Heart right ventricle (tissue), 16 donors: ENCODE measurements at regions of chr12 and their contacts with region 1.

Region 1: DNA sequence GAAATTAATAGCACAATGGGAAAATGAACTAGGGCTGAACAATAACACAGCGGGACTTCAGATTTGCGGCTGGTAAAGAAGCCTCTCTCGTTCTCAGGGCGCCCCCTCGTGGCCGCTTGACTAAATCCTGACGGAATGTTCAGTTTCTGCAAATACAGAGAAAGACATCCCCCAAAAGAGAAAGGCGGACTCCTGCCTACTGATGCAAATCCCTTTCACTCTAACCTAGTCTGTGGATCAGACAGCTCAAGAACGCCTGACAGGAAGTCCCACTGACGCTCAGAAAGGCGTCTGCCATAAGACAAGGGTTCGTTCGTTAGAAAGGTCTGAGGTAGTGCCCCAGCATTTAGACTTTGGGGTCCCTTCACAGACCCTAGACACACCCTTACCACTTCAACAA is 2.5 kb downstream of the NUAK1 start:
- DNase-seq: peak; percentile 91 to 92
- ATAC-seq: peak in 6 of 8 donors; percentile 0 to 66 (median 46)
- H3K4me3 ChIP-seq: peak overlapping the region; percentile 64 to 97 (median 88)
- H3K27ac ChIP-seq: peak overlapping the region; percentile 93 to 100 (median 98)
- H3K4me1 ChIP-seq: peaks cover 26 to 75% (median 61%) of the 10 kb centered on the region in 9 donors
- H3K27me3 ChIP-seq: peaks cover 0 to 54% (median 0%) of the 10 kb centered on the region in 7 donors
- CTCF ChIP-seq: peak; percentile 79 to 93 (median 87)

Region 2: DNA sequence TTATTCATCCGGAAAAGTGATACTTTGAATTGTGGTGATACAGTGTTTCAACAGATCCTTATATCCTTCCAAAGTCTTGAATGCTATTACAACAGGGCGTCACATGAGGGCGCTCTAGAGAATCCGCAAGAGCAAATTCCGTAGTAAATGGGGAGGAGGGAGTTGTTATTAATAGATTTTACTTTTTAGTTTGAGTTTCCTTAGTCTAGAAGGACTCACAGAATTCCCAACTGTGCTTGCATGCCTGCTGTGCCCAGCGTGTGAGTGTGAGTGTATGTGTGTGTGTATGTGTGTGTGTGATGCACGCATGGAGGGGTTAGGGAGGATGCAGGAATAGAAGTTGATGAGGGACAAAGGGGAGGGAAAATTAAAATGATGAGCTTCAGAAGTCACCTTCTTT is 430.5 kb before region 1 on chr12:
- intact Hi-C with region 1: loop called (anchors 2 to 10 kb)
- DNase-seq: peak in 1 of 2 donors; percentile 74
- ATAC-seq: peak; percentile 34 to 79 (median 62)
- H3K4me3 ChIP-seq: no peak overlapping the region
- H3K27ac ChIP-seq: peak overlapping the region in 8 of 10 donors; percentile 22 to 64 (median 46)
- H3K4me1 ChIP-seq: peaks cover 0 to 21% (median 12%) of the 10 kb centered on the region in 9 donors
- H3K27me3 ChIP-seq: no peaks in the 10 kb centered on the region
- CTCF ChIP-seq: peak; percentile 62 to 95 (median 87)

Region 3: DNA sequence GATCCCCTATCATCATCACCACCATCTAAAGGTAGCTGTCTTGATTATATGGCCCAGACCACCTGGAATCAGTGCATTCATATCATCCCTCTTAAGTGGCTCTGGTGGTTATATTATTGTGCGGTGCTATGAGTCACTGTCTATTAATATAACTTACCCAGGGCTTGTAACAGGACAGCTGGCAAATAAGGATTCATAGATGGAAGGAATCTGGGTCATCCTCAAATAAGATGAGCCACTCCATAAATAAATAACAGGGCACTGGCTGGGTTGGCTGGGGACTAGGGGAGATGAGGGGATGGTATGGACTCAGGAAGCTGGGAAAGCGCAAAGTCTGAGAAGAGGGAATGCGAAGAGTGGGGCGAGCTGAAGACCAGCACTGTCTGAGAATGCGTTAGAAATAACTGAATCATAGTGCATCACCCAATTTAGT is 213.6 kb before region 1 on chr12:
- intact Hi-C with region 1: loop called in 1 of 10 experiments (anchors 5 kb)
- DNase-seq: no peak
- ATAC-seq: peak; percentile 64 to 94 (median 89)
- H3K4me3 ChIP-seq: no peak overlapping the region
- H3K27ac ChIP-seq: peak overlapping the region; percentile 14 to 85 (median 66)
- H3K4me1 ChIP-seq: peaks cover 0 to 27% (median 5%) of the 10 kb centered on the region in 9 donors
- H3K27me3 ChIP-seq: no peaks in the 10 kb centered on the region
- CTCF ChIP-seq: no peak

Region 4: DNA sequence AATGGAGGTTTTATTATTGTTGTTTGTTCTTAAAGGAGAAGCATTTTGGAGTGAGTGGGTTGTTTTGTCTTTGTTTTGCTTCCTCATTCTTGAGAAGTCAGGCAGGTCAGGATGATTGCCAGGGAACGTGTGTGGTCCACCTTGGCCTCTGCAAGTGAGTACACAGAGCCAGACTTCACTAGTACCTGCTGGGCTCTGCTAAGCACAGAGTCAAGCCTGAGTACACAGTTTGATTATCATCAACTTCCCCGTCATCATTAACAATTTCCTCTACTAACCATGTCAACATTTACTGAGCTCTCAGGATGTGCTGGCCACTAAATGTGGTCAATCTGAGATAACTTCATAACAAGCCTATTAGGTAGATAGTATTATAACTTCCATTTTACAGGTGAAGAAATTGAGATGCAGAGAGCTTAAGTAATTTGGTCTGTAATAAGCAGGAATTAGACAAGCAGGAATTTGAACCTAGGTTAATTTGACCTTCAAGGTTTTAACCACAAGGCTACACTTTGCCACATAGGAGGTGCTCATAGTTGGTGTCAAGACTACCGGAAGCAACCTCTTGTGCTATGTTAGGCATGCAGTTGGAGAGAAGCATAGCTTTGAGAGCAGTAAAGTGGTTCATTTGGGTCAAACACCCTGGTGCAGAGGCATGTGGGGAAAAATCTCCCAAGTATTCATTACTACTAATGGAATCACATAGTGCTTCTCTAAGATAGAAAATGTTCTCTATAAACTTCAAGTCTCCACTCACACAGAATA is 175.8 kb before region 1 on chr12:
- intact Hi-C with region 1: loop called in 3 of 10 experiments (anchors 5 to 10 kb)
- DNase-seq: no peak
- ATAC-seq: peak in 4 of 8 donors; percentile 39 to 56 (median 52)
- H3K4me3 ChIP-seq: no peak overlapping the region
- H3K27ac ChIP-seq: peak overlapping the region in 4 of 10 donors; percentile 2 to 46 (median 14)
- H3K4me1 ChIP-seq: peaks cover 0 to 45% (median 16%) of the 10 kb centered on the region in 9 donors
- H3K27me3 ChIP-seq: no peaks in the 10 kb centered on the region
- CTCF ChIP-seq: no peak

Region 5: GRCh38 chr12:106030210-106031175 is 105.8 kb before region 1 on chr12:
- intact Hi-C with region 1: loop called in 1 of 10 experiments (anchors 5 kb)
- DNase-seq: no peak
- ATAC-seq: peak in 5 of 8 donors; percentile 35 to 75 (median 45)
- H3K4me3 ChIP-seq: no peak overlapping the region
- H3K27ac ChIP-seq: peak overlapping the region in 1 of 10 donors; percentile 72
- H3K4me1 ChIP-seq: peaks cover 0 to 12% (median 10%) of the 10 kb centered on the region in 9 donors
- H3K27me3 ChIP-seq: no peaks in the 10 kb centered on the region
- CTCF ChIP-seq: no peak

Region 6: GRCh38 chr12:106084014-106084671 is 52.1 kb before region 1 on chr12:
- intact Hi-C with region 1: loop called in 4 of 10 experiments (anchors 5 to 10 kb)
- DNase-seq: no peak
- ATAC-seq: no peak
- H3K4me3 ChIP-seq: no peak overlapping the region
- H3K27ac ChIP-seq: peak overlapping the region in 6 of 10 donors; percentile 4 to 84 (median 42)
- H3K4me1 ChIP-seq: peaks cover 21 to 83% (median 62%) of the 10 kb centered on the region in 9 donors
- H3K27me3 ChIP-seq: no peaks in the 10 kb centered on the region
- CTCF ChIP-seq: no peak

Region 7: DNA sequence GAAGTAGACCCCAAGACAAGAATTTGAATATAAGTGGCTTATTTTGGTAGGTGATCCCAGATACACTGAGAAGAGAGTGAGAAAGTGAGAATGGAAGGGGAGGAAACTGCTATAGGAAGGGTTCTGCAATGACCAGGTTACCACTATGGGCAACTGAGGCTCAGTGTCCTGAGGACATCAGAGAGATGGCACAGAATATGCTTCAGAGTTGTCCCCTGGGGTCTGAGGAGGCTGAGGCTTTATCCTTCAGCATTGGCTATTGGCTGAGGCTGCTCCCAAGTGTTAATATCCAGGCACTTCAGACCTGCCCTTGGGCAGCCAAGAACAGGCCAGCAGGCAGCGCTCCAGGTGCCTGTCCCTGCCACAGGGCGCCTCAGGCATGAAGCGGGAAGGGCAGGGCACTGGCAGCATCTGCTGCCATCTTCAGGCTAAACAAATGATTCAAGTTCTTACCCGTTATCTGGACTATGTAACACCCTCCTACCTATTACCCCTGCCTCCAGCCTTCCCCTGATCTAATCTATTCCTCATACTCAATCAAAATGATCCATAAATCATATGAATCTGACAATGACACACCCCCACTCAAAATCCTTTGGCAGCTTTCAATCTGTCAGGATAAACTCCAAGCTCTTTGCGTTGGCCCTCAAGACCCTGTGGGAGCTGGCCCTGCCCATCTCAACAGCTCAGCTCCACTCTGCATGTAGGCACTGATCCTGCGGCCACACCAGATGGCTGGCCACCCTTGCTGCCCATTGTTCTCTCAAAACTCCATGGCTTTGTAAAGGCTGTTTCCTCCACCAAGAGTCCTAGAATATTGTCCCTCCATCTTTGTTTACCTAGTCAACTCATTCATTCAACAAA is 69.2 kb after region 1 on chr12:
- intact Hi-C with region 1: no loop called
- DNase-seq: peak; percentile 51 to 70
- ATAC-seq: peak; percentile 89 to 100 (median 98)
- H3K4me3 ChIP-seq: no peak overlapping the region
- H3K27ac ChIP-seq: no peak overlapping the region
- H3K4me1 ChIP-seq: no peaks in the 10 kb centered on the region
- H3K27me3 ChIP-seq: no peaks in the 10 kb centered on the region
- CTCF ChIP-seq: peak; percentile 16 to 67 (median 46)

Region 8: DNA sequence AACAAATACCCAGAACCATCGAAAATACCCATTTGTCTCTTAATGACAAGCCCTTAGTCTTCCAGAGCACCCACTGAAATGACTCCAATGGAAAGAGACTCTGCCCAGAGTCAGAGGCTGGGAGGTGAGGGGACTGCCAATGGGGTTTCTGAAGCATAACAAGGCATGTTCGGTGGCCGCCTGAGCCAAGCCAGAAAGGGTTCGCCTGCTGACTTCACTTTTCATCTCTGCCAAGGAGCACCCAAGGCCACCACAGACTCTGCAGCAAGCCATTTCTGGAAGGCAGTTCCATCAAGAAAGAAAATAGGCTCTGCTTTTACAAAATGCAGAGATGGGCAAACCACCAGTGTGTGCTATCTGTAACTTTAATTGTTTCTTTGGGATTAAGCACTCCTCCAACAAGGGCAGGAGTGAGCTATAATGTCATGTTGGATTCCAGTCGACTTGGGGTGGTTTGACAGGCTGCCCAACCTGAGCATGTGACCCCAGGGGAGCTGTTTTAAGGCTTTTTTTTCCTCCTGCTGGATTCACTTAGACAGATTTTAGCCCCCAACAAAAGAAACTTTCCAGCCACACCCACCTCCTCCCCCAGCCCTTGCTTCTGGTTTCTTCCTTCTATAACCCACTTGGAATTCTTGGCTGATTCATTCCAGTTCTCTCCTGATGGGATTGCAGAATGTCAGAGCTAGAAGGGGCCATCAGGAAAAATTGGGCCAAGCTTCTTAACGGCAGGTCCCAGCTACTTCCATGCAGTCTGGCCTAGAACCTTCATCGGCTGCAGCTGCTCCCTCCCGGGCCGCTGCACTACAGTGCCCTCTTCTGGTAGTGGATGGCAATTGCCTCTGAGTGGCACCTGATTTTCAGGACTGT is 87.5 kb after region 1 on chr12:
- intact Hi-C with region 1: loop called in 2 of 10 experiments (anchors 5 kb)
- DNase-seq: peak; percentile 60 to 68
- ATAC-seq: peak; percentile 59 to 86 (median 74)
- H3K4me3 ChIP-seq: no peak overlapping the region
- H3K27ac ChIP-seq: peak overlapping the region in 1 of 10 donors; percentile 24
- H3K4me1 ChIP-seq: peaks cover 0 to 22% (median 7%) of the 10 kb centered on the region in 9 donors
- H3K27me3 ChIP-seq: no peaks in the 10 kb centered on the region
- CTCF ChIP-seq: peak; percentile 93 to 97 (median 95)